HCT116 (cell line): ENCODE measurements at regions of chr19 and their contacts with region 1.

Region 1: DNA sequence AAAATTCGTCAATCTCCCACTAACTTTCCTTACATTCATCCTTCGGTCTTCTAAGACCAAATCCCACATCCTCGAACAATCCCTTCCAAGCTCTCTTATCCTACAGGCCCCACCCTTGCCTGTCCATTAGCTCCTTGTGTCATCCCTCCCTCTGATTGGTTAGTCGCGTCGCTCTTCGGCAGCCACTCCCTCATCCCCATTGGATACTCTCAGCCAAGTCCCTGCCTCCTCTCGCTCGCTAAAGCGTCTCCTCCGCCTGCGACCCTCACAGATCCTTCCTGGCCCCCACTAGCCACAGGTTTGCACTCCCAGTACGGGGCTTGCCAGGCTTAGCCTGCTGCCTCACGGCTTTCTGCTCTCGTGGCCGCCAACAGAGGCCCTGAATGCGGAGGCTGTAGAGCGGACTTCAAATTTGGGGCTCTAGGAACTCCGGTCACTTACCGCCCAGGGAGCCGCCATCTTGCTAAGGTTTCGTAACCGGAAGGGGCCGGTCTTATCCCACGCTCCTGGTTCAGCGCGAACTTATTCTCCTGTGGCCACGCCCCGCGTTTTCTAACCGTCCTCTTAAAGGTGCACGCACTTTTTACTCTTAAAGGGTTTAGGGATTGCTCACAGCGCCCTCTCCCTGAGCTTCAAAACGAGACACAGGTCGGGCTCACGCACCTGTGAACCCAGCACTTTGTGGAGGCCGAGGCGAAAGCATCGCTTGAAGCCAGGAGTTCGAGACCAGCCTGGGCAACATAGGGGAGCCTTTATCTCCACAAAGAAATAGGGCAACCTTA is at the start of gene DMAC2:
- DNase-seq: peak; percentile 99
- ATAC-seq: peak; percentile 97
- H3K4me3 ChIP-seq: peak within 1 kb of the TSS; percentile 76 to 96
- H3K27ac ChIP-seq: peak within 1 kb of the TSS; percentile 81
- H3K4me1 ChIP-seq: peaks cover 10 to 12% of the 10 kb centered on the region in 2 experiments
- H3K27me3 ChIP-seq: no peaks in the 10 kb centered on the region
- CTCF ChIP-seq: peak; percentile 46 to 72 (median 72); a peak in 5 of 6 replicates
- POLR2A ChIP-seq: peak; percentile 57
- RAD21 ChIP-seq: peak; percentile 46
- total RNA-seq, gene DMAC2: 65.6 TPM

Region 2: GRCh38 chr19:40974633-40975037 is 465.0 kb before region 1 on chr19:
- CTCF ChIA-PET with region 1: no interaction called
- POLR2A ChIA-PET with region 1: no interaction called
- RAD21 ChIA-PET with region 1: no interaction called
- intact Hi-C with region 1: no loop called
- DNase-seq: peak; percentile 64
- ATAC-seq: peak; percentile 98
- H3K4me3 ChIP-seq: no peak overlapping the region
- H3K27ac ChIP-seq: no peak overlapping the region
- H3K4me1 ChIP-seq: no peaks in the 10 kb centered on the region
- H3K27me3 ChIP-seq: peaks cover 30% of the 10 kb centered on the region; the same call in 1 of the 2 replicates
- CTCF ChIP-seq: peak; percentile 75 to 88 (median 76)
- POLR2A ChIP-seq: no peak
- RAD21 ChIP-seq: peak; percentile 85

Region 3: GRCh38 chr19:41363753-41364523 is 75.7 kb before region 1 on chr19 and contains the start of gene B9D2:
- CTCF ChIA-PET with region 1: interaction called, 6 read pairs
- POLR2A ChIA-PET with region 1: interaction called, 10 read pairs
- RAD21 ChIA-PET with region 1: no interaction called
- intact Hi-C with region 1: no loop called
- DNase-seq: peak; percentile 96
- ATAC-seq: peak; percentile 96
- H3K4me3 ChIP-seq: peak within 1 kb of the TSS; percentile 69 to 70
- H3K27ac ChIP-seq: peak within 1 kb of the TSS; percentile 89
- H3K4me1 ChIP-seq: peaks cover 8 to 45% of the 10 kb centered on the region in 2 experiments; a peak in 3 of 4 replicates
- H3K27me3 ChIP-seq: no peaks in the 10 kb centered on the region
- CTCF ChIP-seq: no peak
- POLR2A ChIP-seq: peak; percentile 63
- RAD21 ChIP-seq: no peak
- total RNA-seq, gene B9D2: 7.3 TPM

Region 4: GRCh38 chr19:41397086-41398049 is 42.3 kb before region 1 on chr19 and contains the starts of genes BCKDHA and EXOSC5:
- CTCF ChIA-PET with region 1: no interaction called
- POLR2A ChIA-PET with region 1: interaction called, 3 read pairs
- RAD21 ChIA-PET with region 1: no interaction called
- intact Hi-C with region 1: loop called (anchors 1 kb)
- DNase-seq: peak; percentile 100
- ATAC-seq: peak; percentile 96
- H3K4me3 ChIP-seq: peak within 1 kb of the TSS; percentile 60 to 93
- H3K27ac ChIP-seq: peak within 1 kb of the TSS; percentile 65
- H3K4me1 ChIP-seq: peaks cover 12 to 21% of the 10 kb centered on the region in 2 experiments
- H3K27me3 ChIP-seq: no peaks in the 10 kb centered on the region
- CTCF ChIP-seq: no peak
- POLR2A ChIP-seq: no peak
- RAD21 ChIP-seq: no peak
- total RNA-seq, gene BCKDHA: 17.7 TPM
- total RNA-seq, gene EXOSC5: 57.5 TPM

Region 5: GRCh38 chr19:41563854-41564514 is 124.4 kb after region 1 on chr19:
- CTCF ChIA-PET with region 1: interaction called, 10 read pairs
- POLR2A ChIA-PET with region 1: interaction called, 5 read pairs
- RAD21 ChIA-PET with region 1: no interaction called
- intact Hi-C with region 1: no loop called
- DNase-seq: no peak
- ATAC-seq: no peak; the same call in 1 of the 2 replicates
- H3K4me3 ChIP-seq: no peak overlapping the region
- H3K27ac ChIP-seq: no peak overlapping the region
- H3K4me1 ChIP-seq: peaks cover 2 to 7% of the 10 kb centered on the region in 2 experiments; a peak in 1 of 4 replicates
- H3K27me3 ChIP-seq: peaks cover 44% of the 10 kb centered on the region
- CTCF ChIP-seq: no peak
- POLR2A ChIP-seq: no peak
- RAD21 ChIP-seq: no peak

Region 6: GRCh38 chr19:41570639-41571112 is 131.0 kb after region 1 on chr19:
- CTCF ChIA-PET with region 1: interaction called, 12 read pairs
- POLR2A ChIA-PET with region 1: interaction called, 4 read pairs
- RAD21 ChIA-PET with region 1: no interaction called
- intact Hi-C with region 1: no loop called
- DNase-seq: peak; percentile 59
- ATAC-seq: peak; percentile 99
- H3K4me3 ChIP-seq: no peak overlapping the region
- H3K27ac ChIP-seq: no peak overlapping the region
- H3K4me1 ChIP-seq: peaks cover 3 to 10% of the 10 kb centered on the region in 2 experiments; a peak in 3 of 4 replicates
- H3K27me3 ChIP-seq: peaks cover 60% of the 10 kb centered on the region
- CTCF ChIP-seq: peak; percentile 86 to 95 (median 91); a peak in 5 of 6 replicates
- POLR2A ChIP-seq: no peak
- RAD21 ChIP-seq: peak; percentile 85